Esophagus squamous epithelium (tissue), 5 donors: ENCODE measurements at regions of chr15 and their contacts with region 1.

Region 1: GRCh38 chr15:78415286-78415685 is 22.7 kb upstream of the IREB2 start:
- DNase-seq: no peak
- H3K4me3 ChIP-seq: no peak overlapping the region
- H3K27ac ChIP-seq: no peak overlapping the region
- H3K4me1 ChIP-seq: no peaks in the 10 kb centered on the region
- H3K27me3 ChIP-seq: no peaks in the 10 kb centered on the region
- CTCF ChIP-seq: peak in 1 of 6 experiments; percentile 41
- POLR2A ChIP-seq: no peak

Region 2: DNA sequence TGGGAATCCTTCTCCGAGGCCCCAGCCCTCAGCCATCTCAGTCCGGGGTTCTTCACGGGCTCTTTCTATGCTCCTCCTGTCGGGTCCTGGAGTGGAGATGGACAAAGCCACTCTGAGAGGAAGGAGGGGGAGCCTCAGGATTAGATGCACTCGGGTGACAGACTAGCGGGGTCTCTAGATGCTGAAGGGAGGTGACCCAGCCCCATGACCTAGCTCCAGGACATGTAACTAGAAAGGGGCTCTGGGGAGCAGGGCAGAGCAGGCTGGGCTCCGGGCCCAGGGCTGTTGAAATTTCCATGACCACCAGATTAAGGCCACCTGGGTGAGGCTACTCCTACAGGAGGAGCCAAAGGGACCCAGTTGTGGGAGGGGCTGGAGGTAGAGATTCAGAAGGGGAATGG is 101.1 kb before region 1 on chr15:
- intact Hi-C with region 1: loop called (anchors 5 kb)
- DNase-seq: no peak
- H3K4me3 ChIP-seq: no peak overlapping the region
- H3K27ac ChIP-seq: no peak overlapping the region
- H3K4me1 ChIP-seq: no peaks in the 10 kb centered on the region
- H3K27me3 ChIP-seq: peaks cover 0 to 17% (median 0%) of the 10 kb centered on the region in 4 donors
- CTCF ChIP-seq: no peak
- POLR2A ChIP-seq: no peak

Region 3: GRCh38 chr15:78325092-78325843 is 90.0 kb before region 1 on chr15:
- intact Hi-C with region 1: no loop called
- DNase-seq: no peak
- H3K4me3 ChIP-seq: no peak overlapping the region
- H3K27ac ChIP-seq: no peak overlapping the region
- H3K4me1 ChIP-seq: peaks cover 0 to 11% (median 0%) of the 10 kb centered on the region in 3 donors
- H3K27me3 ChIP-seq: no peaks in the 10 kb centered on the region
- CTCF ChIP-seq: no peak
- POLR2A ChIP-seq: no peak

Region 4: DNA sequence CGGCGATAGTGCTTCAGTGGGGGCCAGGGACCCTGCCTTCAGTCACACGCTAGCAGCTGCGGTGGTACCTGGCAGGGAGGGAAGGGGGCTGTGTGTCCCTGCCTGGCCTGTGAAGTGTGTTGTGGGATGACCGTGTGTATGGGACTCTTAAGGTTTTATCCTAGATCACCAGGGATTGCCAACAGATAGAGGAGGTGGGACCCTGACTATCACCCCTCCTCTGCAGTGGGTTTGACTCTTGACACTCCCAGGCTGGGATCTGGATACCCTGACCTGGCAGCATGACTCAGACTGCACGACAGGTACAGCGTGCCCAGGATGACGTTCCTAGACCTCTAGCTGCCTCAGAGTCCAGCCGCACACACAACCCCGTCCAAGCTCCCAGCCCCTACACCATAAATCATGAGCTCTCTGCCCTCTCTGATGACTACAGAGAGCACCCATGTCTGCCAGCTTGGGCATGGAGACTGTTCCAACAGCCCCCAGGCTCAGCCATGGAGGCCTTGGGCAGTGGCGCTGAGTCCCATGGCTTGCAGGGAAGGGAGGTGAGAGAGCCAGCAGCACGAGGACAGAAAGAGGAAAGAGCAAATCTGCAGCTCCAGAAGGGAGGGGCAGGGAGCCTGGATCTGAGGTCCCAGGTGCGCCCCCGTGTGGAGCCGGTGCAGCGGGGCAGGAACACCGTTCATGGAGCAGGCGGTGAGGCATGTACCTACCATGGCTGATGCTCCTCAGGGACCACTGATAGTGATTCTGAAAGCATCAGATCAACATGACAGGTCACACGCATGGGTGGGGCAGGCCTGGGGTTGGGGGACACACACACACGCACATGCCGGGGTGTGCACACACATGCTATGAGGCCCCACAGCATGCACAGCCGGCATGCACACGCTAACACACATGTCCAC is 325.0 kb after region 1 on chr15:
- intact Hi-C with region 1: no loop called
- DNase-seq: no peak
- H3K4me3 ChIP-seq: no peak overlapping the region
- H3K27ac ChIP-seq: no peak overlapping the region
- H3K4me1 ChIP-seq: no peaks in the 10 kb centered on the region
- H3K27me3 ChIP-seq: peaks cover 0 to 11% (median 0%) of the 10 kb centered on the region in 4 donors
- CTCF ChIP-seq: peak in 2 of 6 experiments; percentile 44 to 50
- POLR2A ChIP-seq: no peak